Activated T-helper 1 cell treated with anti-CD3 and anti-CD28 coated beads, Interleukin-12 subunit alpha, Interleukin-12 subunit beta, Interleukin-2, Interleukin-4 antibody, amounts not matched to agents 30 ng/mL and 10 ng/mL and 1 ng/mL, durations not matched to agents 14 hours and 24 hours and 36 hours (primary cell): ENCODE measurements at regions of chr7 and their contacts with region 1.

Region 1: GRCh38 chr7:106346678-106347217 is 62.0 kb upstream of the NAMPT start:
- DNase-seq: peak; percentile 76
- H3K4me3 Mint-ChIP-seq: peak overlapping the region; percentile 63
- H3K27ac Mint-ChIP-seq: peak overlapping the region; percentile 99
- H3K4me1 Mint-ChIP-seq: peaks cover 53% of the 10 kb centered on the region
- H3K27me3 Mint-ChIP-seq: peaks cover 1% of the 10 kb centered on the region

Region 2: GRCh38 chr7:104943502-104944343 is 1403.0 kb before region 1 on chr7:
- intact Hi-C with region 1: loop called (anchors 5 kb)
- DNase-seq: peak; percentile 70
- H3K4me3 Mint-ChIP-seq: peak overlapping the region; percentile 96
- H3K27ac Mint-ChIP-seq: peak overlapping the region; percentile 100
- H3K4me1 Mint-ChIP-seq: peaks cover 72% of the 10 kb centered on the region
- H3K27me3 Mint-ChIP-seq: peaks cover 2% of the 10 kb centered on the region

Region 3: DNA sequence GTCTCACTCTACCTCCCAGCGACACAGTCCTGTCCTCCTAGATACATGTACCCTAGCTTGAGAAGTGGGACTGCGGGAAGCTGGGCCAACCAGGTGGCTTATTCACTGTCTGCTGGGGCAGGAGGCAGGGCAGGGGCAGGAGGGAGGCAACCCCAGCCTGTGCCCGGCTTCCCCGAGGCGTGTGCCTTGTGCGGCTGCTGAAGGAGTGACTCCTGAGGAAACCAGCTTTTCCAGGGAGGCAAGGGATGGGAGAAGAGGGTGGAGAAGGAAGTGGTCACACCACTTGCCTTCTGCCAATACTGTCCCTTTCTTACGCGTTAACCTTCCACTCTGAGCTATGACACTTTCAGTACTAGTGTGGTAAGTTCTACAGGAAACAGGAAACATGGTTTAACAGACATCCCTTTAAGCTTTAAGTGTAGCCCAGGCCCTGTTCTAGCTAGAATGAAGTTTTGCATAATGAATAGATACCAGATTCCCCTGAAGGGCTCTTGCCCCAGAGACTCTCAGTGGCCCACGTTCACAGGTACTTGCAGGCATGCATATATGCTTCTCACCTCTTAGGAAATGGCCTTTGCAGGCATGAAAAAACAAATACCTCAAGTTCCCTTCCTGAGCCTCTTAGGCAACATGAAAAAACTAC is 275.3 kb before region 1 on chr7:
- intact Hi-C with region 1: loop called (anchors 1 kb)
- DNase-seq: peak; percentile 44
- H3K4me3 Mint-ChIP-seq: peak overlapping the region; percentile 59
- H3K27ac Mint-ChIP-seq: peak overlapping the region; percentile 93
- H3K4me1 Mint-ChIP-seq: peaks cover 42% of the 10 kb centered on the region
- H3K27me3 Mint-ChIP-seq: no peaks in the 10 kb centered on the region

Region 4: GRCh38 chr7:106367018-106367420 is 20.3 kb after region 1 on chr7:
- intact Hi-C with region 1: loop called (anchors 1 kb)
- DNase-seq: no peak
- H3K4me3 Mint-ChIP-seq: no peak overlapping the region
- H3K27ac Mint-ChIP-seq: peak overlapping the region; percentile 35
- H3K4me1 Mint-ChIP-seq: peaks cover 36% of the 10 kb centered on the region
- H3K27me3 Mint-ChIP-seq: no peaks in the 10 kb centered on the region

Region 5: GRCh38 chr7:106425017-106425719 is 78.4 kb after region 1 on chr7:
- intact Hi-C with region 1: loop called (anchors 1 kb)
- DNase-seq: peak; percentile 67
- H3K4me3 Mint-ChIP-seq: peak overlapping the region; percentile 67
- H3K27ac Mint-ChIP-seq: peak overlapping the region; percentile 97
- H3K4me1 Mint-ChIP-seq: peaks cover 91% of the 10 kb centered on the region
- H3K27me3 Mint-ChIP-seq: no peaks in the 10 kb centered on the region

Region 6: DNA sequence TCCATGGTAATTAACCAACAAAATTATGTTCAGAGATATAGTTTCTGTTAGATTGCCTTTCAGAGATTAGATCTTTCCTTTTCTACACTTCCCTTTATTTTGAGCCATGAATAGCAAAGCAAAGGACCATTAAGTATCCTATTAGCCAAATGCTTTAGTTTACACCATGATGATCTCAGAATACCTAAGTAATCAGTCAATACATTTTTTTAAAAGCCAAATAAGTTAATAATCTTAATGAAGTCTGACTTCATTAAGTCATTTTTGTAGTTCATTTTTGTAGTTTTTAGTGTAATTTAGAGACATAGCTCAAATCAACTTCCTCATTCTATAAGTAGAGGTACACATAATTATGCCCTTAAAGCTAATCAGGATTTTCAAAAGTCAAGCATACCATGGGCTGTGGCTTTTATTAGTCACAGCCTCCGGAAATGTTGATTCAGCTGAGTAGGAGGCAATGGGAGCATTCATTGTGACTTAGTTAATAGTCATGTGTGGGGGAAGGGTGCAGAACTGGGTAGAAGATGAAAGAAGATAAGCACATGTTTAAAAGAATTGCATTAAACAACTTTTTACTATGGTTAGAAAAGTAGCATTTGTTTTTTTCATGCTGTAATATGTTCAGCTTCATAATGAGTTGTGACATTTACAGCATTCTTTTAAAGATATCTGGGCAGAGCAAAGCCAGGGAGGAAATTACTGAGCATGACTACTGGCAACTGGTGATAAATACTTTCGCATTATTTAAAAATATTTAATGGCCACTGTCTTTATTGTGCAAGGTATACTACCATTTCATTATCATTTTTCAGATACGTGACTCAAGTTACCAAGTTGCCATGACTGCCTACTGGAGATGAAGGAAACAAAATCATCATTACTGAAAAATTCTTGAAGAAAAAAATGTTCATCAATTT is 371.5 kb after region 1 on chr7:
- intact Hi-C with region 1: loop called (anchors 1 kb)
- DNase-seq: peak; percentile 37
- H3K4me3 Mint-ChIP-seq: no peak overlapping the region
- H3K27ac Mint-ChIP-seq: no peak overlapping the region
- H3K4me1 Mint-ChIP-seq: peaks cover 11% of the 10 kb centered on the region
- H3K27me3 Mint-ChIP-seq: no peaks in the 10 kb centered on the region